Dendritic cell treated with granulocyte-macrophage colony-stimulating factor and Interleukin-4, amounts not matched to agents 40 ng/mL and 50 ng/mL, for 4 days (primary cell): ENCODE measurements at regions of chr11 and their contacts with region 1.

Region 1: DNA sequence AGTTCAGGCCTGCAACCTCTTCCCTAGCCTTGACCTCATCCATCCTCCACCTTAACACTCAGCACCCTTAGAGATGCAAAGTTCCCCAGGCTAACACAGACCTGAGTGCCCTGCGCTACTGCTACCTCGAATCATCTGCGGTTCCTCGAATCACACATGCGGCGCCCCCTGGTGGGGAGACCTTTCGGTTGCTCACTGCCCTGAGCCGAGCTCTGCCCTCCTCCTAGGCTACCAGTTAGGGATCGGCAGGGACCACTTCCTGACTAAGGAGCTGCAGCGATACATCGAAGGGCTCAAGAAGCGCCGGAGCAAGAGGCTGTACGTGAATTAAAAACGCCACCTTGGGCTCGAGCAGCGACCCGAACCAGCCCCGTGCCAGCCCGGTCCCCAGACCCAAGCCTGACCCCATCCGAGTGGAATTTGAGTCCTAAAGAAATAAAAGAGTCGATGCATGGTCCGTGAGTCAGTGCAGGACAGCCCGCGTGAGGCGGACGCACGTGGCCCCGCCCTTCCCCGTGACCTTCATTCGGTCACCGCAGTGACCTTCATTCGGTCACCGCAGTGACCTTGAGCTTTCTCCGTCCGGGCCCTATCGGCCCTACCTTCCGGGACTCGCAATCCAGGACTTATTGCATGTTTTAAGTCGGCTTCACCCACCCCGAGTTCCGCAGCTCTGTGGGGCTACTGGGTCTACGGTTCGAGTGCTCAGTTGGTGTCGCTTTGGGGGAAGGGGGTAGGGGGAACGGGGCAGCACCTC is 830 bp upstream of the ESRRA start:
- H3K4me3 Mint-ChIP-seq: peak overlapping the region; percentile 99
- H3K27ac Mint-ChIP-seq: peak overlapping the region; percentile 100
- H3K4me1 Mint-ChIP-seq: peaks cover 54% of the 10 kb centered on the region
- H3K27me3 Mint-ChIP-seq: peaks cover 26% of the 10 kb centered on the region

Region 2: GRCh38 chr11:64240394-64241174 is 63.9 kb before region 1 on chr11 and contains the start of gene FKBP2:
- intact Hi-C with region 1: loop called (anchors 1 kb)
- H3K4me3 Mint-ChIP-seq: peak within 1 kb of the TSS; percentile 83
- H3K27ac Mint-ChIP-seq: peak within 1 kb of the TSS; percentile 99
- H3K4me1 Mint-ChIP-seq: peaks cover 83% of the 10 kb centered on the region
- H3K27me3 Mint-ChIP-seq: no peaks in the 10 kb centered on the region

Region 3: GRCh38 chr11:64269380-64270234 is 34.9 kb before region 1 on chr11:
- intact Hi-C with region 1: loop called (anchors 1 kb)
- H3K4me3 Mint-ChIP-seq: peak overlapping the region; percentile 98
- H3K27ac Mint-ChIP-seq: peak overlapping the region; percentile 91
- H3K4me1 Mint-ChIP-seq: peaks cover 53% of the 10 kb centered on the region
- H3K27me3 Mint-ChIP-seq: no peaks in the 10 kb centered on the region

Region 4: DNA sequence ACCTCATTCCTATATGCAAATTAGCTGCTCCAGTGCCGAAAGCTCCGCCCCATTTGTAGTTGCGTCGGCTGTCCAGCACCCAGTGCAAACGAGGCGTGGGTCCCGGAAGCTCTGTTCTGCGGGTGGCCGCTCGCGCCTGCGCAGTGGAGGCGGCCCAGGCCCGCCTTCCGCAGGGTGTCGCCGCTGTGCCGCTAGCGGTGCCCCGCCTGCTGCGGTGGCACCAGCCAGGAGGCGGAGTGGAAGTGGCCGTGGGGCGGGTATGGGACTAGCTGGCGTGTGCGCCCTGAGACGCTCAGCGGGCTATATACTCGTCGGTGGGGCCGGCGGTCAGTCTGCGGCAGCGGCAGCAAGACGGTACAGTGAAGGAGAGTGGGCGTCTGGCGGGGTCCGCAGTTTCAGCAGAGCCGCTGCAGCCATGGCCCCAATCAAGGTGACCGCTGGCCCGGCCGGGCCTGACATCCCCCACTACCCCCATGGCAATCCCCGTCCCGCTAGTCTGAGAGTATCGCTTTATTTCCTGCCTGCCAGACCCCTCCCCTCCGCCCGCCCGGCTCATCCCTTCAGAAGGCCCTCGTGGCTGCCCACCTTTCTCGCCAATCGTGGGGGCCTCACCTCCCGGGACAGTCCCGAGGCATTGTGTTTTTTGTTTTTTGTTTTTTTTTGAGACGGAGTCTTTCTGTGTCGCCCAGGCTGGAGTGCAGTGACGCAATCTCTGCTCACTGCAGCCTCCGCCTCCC is 13.6 kb after region 1 on chr11 and contains the start of gene PRDX5:
- intact Hi-C with region 1: loop called (anchors 1 kb)
- H3K4me3 Mint-ChIP-seq: peak within 1 kb of the TSS; percentile 80
- H3K27ac Mint-ChIP-seq: peak within 1 kb of the TSS; percentile 96
- H3K4me1 Mint-ChIP-seq: peaks cover 63% of the 10 kb centered on the region
- H3K27me3 Mint-ChIP-seq: no peaks in the 10 kb centered on the region

Region 5: GRCh38 chr11:64331557-64332371 is 27.3 kb after region 1 on chr11:
- intact Hi-C with region 1: no loop called
- H3K4me3 Mint-ChIP-seq: peak overlapping the region; percentile 9
- H3K27ac Mint-ChIP-seq: peak overlapping the region; percentile 76
- H3K4me1 Mint-ChIP-seq: peaks cover 37% of the 10 kb centered on the region
- H3K27me3 Mint-ChIP-seq: peaks cover 6% of the 10 kb centered on the region

Region 6: DNA sequence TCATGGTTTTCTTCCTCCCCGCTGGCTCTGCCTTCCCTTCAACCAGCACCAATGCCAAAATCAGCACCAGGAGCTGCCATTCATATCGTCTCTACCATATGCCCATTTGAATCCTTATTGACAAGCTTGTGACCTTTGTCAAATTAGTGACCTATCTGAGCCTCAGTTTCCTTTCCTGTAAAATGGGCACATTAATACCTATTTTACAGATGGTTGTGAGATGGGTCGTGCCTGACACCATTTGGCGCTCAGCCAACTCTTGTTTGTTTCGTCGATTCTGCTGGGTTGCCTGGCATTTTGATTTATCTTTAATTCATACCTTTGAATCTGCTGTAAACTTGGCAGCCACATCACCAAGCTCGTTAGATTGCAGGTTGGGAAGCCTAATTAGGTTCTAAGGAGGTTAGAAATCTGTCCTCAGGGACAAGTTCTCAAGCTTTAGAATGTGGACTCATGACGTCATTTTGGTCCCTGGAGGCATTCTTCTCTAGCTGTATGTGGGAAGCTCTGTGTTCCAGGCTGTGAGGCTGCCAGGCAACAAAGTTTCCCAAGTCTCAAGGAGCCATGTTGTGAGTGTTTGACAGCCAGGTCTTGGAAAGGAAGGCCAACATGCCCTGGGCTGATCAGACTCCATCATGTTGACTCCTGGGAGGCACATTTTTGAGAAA is 115.5 kb after region 1 on chr11:
- intact Hi-C with region 1: no loop called
- H3K4me3 Mint-ChIP-seq: no peak overlapping the region
- H3K27ac Mint-ChIP-seq: no peak overlapping the region
- H3K4me1 Mint-ChIP-seq: peaks cover 11% of the 10 kb centered on the region
- H3K27me3 Mint-ChIP-seq: peaks cover 4% of the 10 kb centered on the region